Naive thymus-derived CD4-positive, alpha-beta T cell (primary cell): ENCODE measurements at regions of chr12 and their contacts with region 1.

Region 1: DNA sequence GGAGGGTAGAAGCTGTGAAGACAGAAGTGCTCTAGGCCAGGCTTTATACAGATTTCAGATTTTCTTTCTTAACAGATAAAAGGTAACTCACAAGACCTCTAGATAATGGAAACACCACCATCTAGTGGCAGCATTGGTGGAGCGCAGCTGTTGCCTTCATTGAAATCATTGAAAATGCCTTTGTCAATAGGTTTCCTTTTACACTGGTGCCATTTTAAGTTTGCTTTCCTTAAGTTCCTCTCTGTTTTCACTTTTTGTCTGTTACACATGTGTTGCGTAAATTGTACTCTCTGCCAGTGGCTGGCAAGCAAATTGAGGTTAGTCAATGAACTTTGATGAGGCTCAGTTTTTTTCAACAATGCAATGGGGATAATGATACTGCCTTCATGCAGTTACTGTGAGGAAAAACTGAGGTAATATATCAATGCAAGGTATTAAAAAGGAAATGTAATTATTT is 31.1 kb downstream of the ALDH1L2 start:
- DNase-seq: peak; percentile 35 to 76 (median 67)
- ATAC-seq: peak; percentile 94
- H3K4me3 ChIP-seq: no peak overlapping the region
- H3K4me3 Mint-ChIP-seq: no peak overlapping the region
- H3K27ac ChIP-seq: no peak overlapping the region
- H3K27ac Mint-ChIP-seq: no peak overlapping the region
- H3K4me1 ChIP-seq: no peaks in the 10 kb centered on the region
- H3K4me1 Mint-ChIP-seq: peaks cover 0 to 5% (median 0%) of the 10 kb centered on the region in 7 donors
- H3K27me3 ChIP-seq: no peaks in the 10 kb centered on the region
- H3K27me3 Mint-ChIP-seq: peaks cover 0 to 7% (median 0%) of the 10 kb centered on the region in 5 donors

Region 2: DNA sequence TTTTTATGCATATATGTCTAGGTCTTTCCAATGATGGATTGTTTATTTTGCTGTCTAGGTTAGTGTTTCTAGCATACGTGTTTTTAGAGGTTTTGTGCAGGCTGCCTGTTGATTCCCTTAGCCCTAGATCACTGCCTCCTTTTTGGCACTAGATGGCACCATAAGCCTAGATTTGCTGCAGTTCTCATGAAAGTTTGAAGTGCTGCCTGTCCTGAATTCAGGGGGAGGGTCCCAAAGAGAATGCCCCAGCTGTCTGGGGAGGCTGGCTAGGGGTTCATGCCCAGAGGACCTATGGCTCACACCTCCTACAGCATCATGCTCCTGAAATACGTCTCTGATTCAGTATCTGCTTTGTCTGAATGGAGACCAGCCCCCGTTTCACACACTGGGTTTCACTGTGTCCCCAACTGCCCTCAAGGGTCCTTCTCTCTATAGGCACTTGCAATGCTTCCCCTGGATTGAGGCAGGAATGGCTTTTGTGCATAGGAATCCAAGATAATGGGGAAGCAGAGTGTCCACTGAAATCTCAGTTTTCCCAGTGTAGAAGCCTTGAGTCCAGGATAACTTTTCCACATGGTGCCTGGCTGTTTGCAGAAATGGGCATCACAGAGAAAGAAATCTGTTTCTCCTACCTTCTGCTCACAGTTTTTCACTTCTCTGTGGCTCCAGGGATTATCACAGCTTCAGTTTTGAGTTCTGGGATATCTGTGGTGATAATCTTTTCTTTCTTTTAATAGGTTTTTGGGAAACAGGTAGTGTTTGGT is 851.7 kb before region 1 on chr12:
- CTCF ChIA-PET with region 1: interaction called, 4 read pairs
- POLR2A ChIA-PET with region 1: no interaction called
- intact Hi-C with region 1: loop called (anchors 1 kb)
- DNase-seq: peak; percentile 8 to 72 (median 59)
- ATAC-seq: peak; percentile 78
- H3K4me3 ChIP-seq: no peak overlapping the region
- H3K4me3 Mint-ChIP-seq: peak overlapping the region in 1 of 10 donors; percentile 54
- H3K27ac ChIP-seq: no peak overlapping the region
- H3K27ac Mint-ChIP-seq: no peak overlapping the region
- H3K4me1 ChIP-seq: no peaks in the 10 kb centered on the region
- H3K4me1 Mint-ChIP-seq: peaks cover 0 to 4% (median 3%) of the 10 kb centered on the region in 7 donors
- H3K27me3 ChIP-seq: no peaks in the 10 kb centered on the region
- H3K27me3 Mint-ChIP-seq: peaks cover 5 to 24% (median 9%) of the 10 kb centered on the region in 5 donors

Region 3: GRCh38 chr12:104381731-104382480 is 671.2 kb before region 1 on chr12:
- CTCF ChIA-PET with region 1: interaction called, 41 read pairs
- POLR2A ChIA-PET with region 1: interaction called, 5 read pairs
- intact Hi-C with region 1: loop called (anchors 1 kb)
- DNase-seq: peak; percentile 62 to 86 (median 74)
- ATAC-seq: peak; percentile 94
- H3K4me3 ChIP-seq: no peak overlapping the region
- H3K4me3 Mint-ChIP-seq: no peak overlapping the region
- H3K27ac ChIP-seq: no peak overlapping the region
- H3K27ac Mint-ChIP-seq: peak overlapping the region in 1 of 9 donors; percentile 17
- H3K4me1 ChIP-seq: peaks cover 0 to 6% of the 10 kb centered on the region in 2 donors
- H3K4me1 Mint-ChIP-seq: peaks cover 0 to 18% (median 6%) of the 10 kb centered on the region in 7 donors
- H3K27me3 ChIP-seq: no peaks in the 10 kb centered on the region
- H3K27me3 Mint-ChIP-seq: peaks cover 0 to 15% (median 10%) of the 10 kb centered on the region in 5 donors

Region 4: DNA sequence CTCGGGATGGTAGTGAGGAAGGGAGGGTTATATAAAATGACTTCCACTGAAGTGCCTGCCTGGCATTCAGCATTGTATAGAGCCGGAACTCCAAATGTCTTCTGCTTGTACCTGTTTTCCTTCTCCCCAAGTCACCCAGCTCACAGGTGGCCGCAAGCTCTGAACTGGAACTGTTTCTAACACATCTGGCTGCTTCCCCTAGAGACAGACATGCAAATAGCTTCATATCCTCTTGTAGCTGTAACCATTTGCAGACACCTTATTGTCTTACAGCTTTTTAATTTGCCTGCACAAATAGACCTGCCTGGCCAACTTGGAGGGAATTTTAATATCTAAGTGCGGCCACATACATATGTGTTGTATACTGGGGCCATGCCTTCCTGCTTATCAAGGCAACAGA is 470.4 kb before region 1 on chr12:
- CTCF ChIA-PET with region 1: no interaction called
- POLR2A ChIA-PET with region 1: no interaction called
- intact Hi-C with region 1: no loop called
- DNase-seq: peak in 2 of 9 donors; percentile 9
- ATAC-seq: peak; percentile 34
- H3K4me3 ChIP-seq: no peak overlapping the region
- H3K4me3 Mint-ChIP-seq: no peak overlapping the region
- H3K27ac ChIP-seq: no peak overlapping the region
- H3K27ac Mint-ChIP-seq: peak overlapping the region in 5 of 9 donors; percentile 3 to 39 (median 19)
- H3K4me1 ChIP-seq: peaks cover 0 to 6% of the 10 kb centered on the region in 2 donors
- H3K4me1 Mint-ChIP-seq: peaks cover 31 to 84% (median 56%) of the 10 kb centered on the region in 7 donors
- H3K27me3 ChIP-seq: no peaks in the 10 kb centered on the region
- H3K27me3 Mint-ChIP-seq: no peaks in the 10 kb centered on the region

Region 5: DNA sequence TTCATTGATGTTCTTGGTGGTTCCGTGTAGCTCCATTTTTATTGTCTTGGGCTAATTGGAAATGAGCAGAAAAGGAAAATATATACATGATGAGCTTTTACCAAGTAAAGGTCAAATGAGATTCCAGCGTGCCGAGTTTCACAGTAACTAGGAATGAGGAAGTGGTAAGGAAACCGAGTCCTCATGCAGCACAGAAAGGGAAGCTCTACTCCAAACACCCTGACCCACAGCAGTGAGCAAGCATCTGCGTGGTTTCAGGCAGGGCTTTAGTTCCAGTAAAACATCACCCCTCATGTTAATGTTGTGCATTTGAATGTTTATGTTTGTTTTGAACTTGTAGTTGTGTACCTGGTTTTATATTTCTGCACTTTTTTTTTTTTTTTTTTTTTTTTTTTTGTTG is 303.1 kb before region 1 on chr12:
- CTCF ChIA-PET with region 1: no interaction called
- POLR2A ChIA-PET with region 1: no interaction called
- intact Hi-C with region 1: no loop called
- DNase-seq: no peak
- ATAC-seq: peak; percentile 85
- H3K4me3 ChIP-seq: no peak overlapping the region
- H3K4me3 Mint-ChIP-seq: peak overlapping the region in 1 of 10 donors; percentile 57
- H3K27ac ChIP-seq: no peak overlapping the region
- H3K27ac Mint-ChIP-seq: peak overlapping the region in 2 of 9 donors; percentile 53 to 73
- H3K4me1 ChIP-seq: peaks cover 4 to 16% of the 10 kb centered on the region in 2 donors
- H3K4me1 Mint-ChIP-seq: peaks cover 39 to 72% (median 50%) of the 10 kb centered on the region in 7 donors
- H3K27me3 ChIP-seq: no peaks in the 10 kb centered on the region
- H3K27me3 Mint-ChIP-seq: no peaks in the 10 kb centered on the region

Region 6: DNA sequence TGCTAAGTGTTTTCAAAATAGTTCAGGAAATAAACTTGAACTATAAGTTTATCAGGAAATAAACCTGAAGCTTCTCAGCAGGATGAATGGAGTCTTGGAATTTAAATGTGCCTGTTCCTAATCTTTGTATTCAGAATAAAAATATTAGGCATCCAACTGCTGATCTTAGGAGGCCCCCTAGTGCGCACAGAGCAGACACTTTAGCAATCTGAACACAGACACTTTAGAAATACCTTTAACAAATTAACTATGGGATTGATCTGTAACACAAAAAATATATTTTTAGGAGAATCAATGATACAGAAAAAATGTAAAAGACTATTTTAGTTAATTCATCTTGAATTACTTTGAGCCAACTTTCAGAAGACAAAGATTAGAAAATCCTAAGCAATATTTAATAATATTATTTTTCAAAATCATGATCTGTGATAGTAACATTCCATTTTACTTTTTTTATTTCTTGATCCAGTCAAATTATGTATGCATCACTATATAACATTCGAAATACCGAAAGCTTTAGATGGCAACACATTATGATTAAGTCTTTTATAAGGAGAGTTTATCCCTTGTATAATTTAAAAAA is 175.9 kb before region 1 on chr12:
- CTCF ChIA-PET with region 1: interaction called, 3 read pairs
- POLR2A ChIA-PET with region 1: no interaction called
- intact Hi-C with region 1: loop called in 1 of 2 experiments (anchors 1 kb)
- DNase-seq: peak in 7 of 9 donors; percentile 5 to 52 (median 29)
- ATAC-seq: peak; percentile 56
- H3K4me3 ChIP-seq: no peak overlapping the region
- H3K4me3 Mint-ChIP-seq: no peak overlapping the region
- H3K27ac ChIP-seq: no peak overlapping the region
- H3K27ac Mint-ChIP-seq: no peak overlapping the region
- H3K4me1 ChIP-seq: no peaks in the 10 kb centered on the region
- H3K4me1 Mint-ChIP-seq: peaks cover 0 to 9% (median 0%) of the 10 kb centered on the region in 7 donors
- H3K27me3 ChIP-seq: no peaks in the 10 kb centered on the region
- H3K27me3 Mint-ChIP-seq: peaks cover 0 to 12% (median 0%) of the 10 kb centered on the region in 5 donors

Region 7: DNA sequence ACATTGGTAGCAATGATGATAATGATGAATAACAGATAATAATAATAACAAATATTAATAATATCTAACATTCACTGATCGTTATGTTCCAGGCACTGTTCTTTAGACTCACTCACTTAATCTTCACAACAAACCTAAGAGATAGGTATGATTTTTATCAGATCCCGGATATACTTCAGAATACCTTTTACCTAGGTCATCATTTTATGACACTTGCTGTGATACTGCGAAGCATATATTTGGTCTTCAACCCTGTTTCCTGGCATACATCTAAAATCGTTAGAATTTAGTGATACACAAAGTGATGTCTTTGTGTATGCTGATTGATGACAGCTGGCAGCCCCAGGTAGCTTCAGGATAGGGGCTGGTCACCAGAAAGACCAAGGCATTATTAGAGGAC is 141.2 kb before region 1 on chr12:
- CTCF ChIA-PET with region 1: no interaction called
- POLR2A ChIA-PET with region 1: no interaction called
- intact Hi-C with region 1: no loop called
- DNase-seq: no peak
- ATAC-seq: no peak
- H3K4me3 ChIP-seq: no peak overlapping the region
- H3K4me3 Mint-ChIP-seq: no peak overlapping the region
- H3K27ac ChIP-seq: no peak overlapping the region
- H3K27ac Mint-ChIP-seq: no peak overlapping the region
- H3K4me1 ChIP-seq: no peaks in the 10 kb centered on the region
- H3K4me1 Mint-ChIP-seq: no peaks in the 10 kb centered on the region
- H3K27me3 ChIP-seq: no peaks in the 10 kb centered on the region
- H3K27me3 Mint-ChIP-seq: peaks cover 0 to 5% (median 0%) of the 10 kb centered on the region in 5 donors

Region 8: DNA sequence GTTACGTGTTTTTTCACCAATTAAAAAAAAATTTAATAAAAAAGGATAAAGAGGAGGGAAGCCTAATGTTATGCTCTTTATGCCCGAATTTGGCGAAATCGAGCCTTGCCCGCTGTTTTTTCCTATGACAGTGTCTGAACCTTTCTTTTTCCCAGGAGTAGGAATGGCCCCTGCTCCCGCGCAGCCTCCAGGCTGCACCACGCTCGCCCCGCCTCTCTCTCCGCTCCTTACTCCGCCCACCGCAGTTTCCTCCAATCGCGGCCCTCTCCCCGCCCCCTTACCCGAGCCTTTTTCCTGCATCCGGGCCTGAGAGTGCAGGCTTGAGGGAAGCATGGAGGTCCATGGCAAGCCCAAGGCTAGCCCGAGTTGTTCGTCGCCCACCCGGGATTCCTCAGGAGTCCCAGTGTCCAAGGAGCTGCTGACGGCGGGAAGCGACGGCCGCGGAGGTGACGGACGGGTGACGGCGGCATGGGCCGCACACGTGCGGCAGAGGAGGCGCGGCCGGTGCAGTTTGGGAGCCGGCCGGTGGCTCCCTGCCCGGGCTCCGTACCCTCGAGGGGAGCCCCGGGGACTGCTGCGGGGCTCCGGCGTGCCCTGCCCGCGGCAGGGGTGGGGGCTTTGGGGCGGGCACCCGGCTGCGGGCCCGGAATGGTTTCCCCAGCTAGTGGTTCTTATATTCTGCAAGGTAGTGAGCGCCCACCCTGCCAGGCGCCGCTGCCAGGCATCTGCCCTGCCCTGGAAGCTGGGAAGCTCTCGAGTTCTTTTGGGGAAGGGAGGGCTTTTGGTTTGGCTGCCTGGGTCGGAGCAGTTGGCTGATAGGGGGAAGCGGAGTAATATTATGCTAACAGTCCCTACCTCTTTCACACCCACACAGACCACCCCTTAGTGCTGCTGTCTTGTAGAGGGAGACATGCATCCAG is 66.9 kb before region 1 on chr12 and contains the start of gene NOPCHAP1:
- CTCF ChIA-PET with region 1: no interaction called
- POLR2A ChIA-PET with region 1: no interaction called
- intact Hi-C with region 1: loop called (anchors 5 kb)
- DNase-seq: peak; percentile 64 to 84 (median 78)
- ATAC-seq: peak; percentile 100
- H3K4me3 ChIP-seq: peak within 1 kb of the TSS; percentile 91
- H3K4me3 Mint-ChIP-seq: peak within 1 kb of the TSS; percentile 90 to 95 (median 94)
- H3K27ac ChIP-seq: peak within 1 kb of the TSS; percentile 73
- H3K27ac Mint-ChIP-seq: peak within 1 kb of the TSS; percentile 63 to 87 (median 74)
- H3K4me1 ChIP-seq: peaks cover 12 to 13% of the 10 kb centered on the region in 2 donors
- H3K4me1 Mint-ChIP-seq: peaks cover 19 to 47% (median 37%) of the 10 kb centered on the region in 7 donors
- H3K27me3 ChIP-seq: no peaks in the 10 kb centered on the region
- H3K27me3 Mint-ChIP-seq: peaks cover 0 to 13% (median 5%) of the 10 kb centered on the region in 5 donors
- total RNA-seq, gene NOPCHAP1: 10.5 to 18.0 (median 15.2) TPM

Region 9: GRCh38 chr12:105036937-105037649 is 16.1 kb before region 1 on chr12:
- CTCF ChIA-PET with region 1: interaction called, 11 read pairs
- POLR2A ChIA-PET with region 1: no interaction called
- intact Hi-C with region 1: no loop called
- DNase-seq: peak in 4 of 9 donors; percentile 1 to 16 (median 6)
- ATAC-seq: no peak
- H3K4me3 ChIP-seq: no peak overlapping the region
- H3K4me3 Mint-ChIP-seq: peak overlapping the region in 8 of 10 donors; percentile 32 to 79 (median 44)
- H3K27ac ChIP-seq: peak overlapping the region; percentile 11
- H3K27ac Mint-ChIP-seq: peak overlapping the region in 8 of 9 donors; percentile 56 to 87 (median 80)
- H3K4me1 ChIP-seq: peaks cover 11 to 15% of the 10 kb centered on the region in 2 donors
- H3K4me1 Mint-ChIP-seq: peaks cover 4 to 29% (median 16%) of the 10 kb centered on the region in 7 donors
- H3K27me3 ChIP-seq: no peaks in the 10 kb centered on the region
- H3K27me3 Mint-ChIP-seq: no peaks in the 10 kb centered on the region

Region 10: DNA sequence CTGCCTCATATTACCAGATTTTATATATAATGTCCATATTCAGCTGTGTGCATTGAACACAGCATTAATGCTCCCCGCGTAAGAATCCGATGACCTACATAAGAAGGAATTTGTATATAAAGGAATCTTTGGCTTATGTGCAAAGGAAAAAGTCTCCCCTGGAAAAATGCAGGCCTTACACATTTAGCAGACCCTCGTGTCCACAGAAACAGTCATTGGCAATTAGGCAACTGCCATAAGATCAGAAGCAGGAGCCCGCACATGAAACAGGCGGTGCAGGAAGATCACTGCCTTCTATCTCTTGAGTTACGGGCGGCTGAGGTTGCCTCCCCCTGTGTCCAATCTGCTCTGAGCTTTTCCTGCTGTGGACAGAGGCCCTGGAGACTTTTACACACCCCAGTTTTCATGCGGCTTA is 1466.5 kb after region 1 on chr12:
- CTCF ChIA-PET with region 1: no interaction called
- POLR2A ChIA-PET with region 1: no interaction called
- intact Hi-C with region 1: no loop called
- DNase-seq: no peak
- ATAC-seq: no peak
- H3K4me3 ChIP-seq: no peak overlapping the region
- H3K4me3 Mint-ChIP-seq: no peak overlapping the region
- H3K27ac ChIP-seq: no peak overlapping the region
- H3K27ac Mint-ChIP-seq: no peak overlapping the region
- H3K4me1 ChIP-seq: no peaks in the 10 kb centered on the region
- H3K4me1 Mint-ChIP-seq: no peaks in the 10 kb centered on the region
- H3K27me3 ChIP-seq: no peaks in the 10 kb centered on the region
- H3K27me3 Mint-ChIP-seq: peaks cover 0 to 17% (median 11%) of the 10 kb centered on the region in 5 donors